Activated B cell treated with CpG ODN at 0.5 μM for 24 hours (primary cell): ENCODE measurements at regions of chr3 and their contacts with region 1.

Region 1: DNA sequence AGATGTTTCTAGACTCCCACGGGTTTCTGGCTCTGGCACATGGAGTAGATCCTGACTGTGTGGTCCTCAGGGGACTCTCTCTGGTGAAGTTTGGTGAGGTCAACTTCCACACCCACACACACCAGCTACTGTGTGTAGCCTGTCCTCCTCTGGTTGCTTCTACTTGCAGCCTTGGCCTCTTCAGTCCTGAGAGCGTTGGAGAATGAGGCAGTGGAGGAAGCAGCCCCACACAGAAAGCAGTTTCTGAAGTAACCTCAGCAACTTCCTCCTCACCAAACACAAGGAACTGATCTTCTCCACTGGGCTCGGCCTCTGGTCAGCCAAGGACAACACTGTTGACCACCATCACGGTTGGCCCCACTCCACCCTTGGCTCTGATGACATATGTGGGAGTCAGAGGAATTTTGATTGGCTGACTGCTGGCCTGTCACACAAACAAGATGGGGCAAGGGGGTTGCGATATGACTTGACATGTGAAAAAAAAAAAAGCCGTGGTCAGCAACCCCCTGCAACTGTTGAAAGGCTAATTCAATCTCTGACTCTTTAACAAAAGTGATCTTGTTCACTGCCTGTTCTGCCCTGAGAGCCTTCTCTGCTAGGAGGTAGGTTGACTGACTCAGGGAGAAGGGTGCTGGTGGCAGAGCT is 19.6 kb downstream of the CD86 start:
- DNase-seq: peak; percentile 32
- ATAC-seq: peak; percentile 18
- H3K4me3 Mint-ChIP-seq: peak overlapping the region; percentile 62
- H3K27ac Mint-ChIP-seq: peak overlapping the region; percentile 89
- H3K4me1 Mint-ChIP-seq: peaks cover 74% of the 10 kb centered on the region
- H3K27me3 Mint-ChIP-seq: no peaks in the 10 kb centered on the region
- CTCF ChIP-seq: no peak

Region 2: GRCh38 chr3:121958801-121959200 is 115.9 kb before region 1 on chr3:
- CTCF ChIA-PET with region 1: no interaction called
- POLR2A ChIA-PET with region 1: no interaction called
- intact Hi-C with region 1: no loop called
- DNase-seq: no peak
- ATAC-seq: no peak
- H3K4me3 Mint-ChIP-seq: no peak overlapping the region
- H3K27ac Mint-ChIP-seq: no peak overlapping the region
- H3K4me1 Mint-ChIP-seq: peaks cover 29% of the 10 kb centered on the region
- H3K27me3 Mint-ChIP-seq: no peaks in the 10 kb centered on the region
- CTCF ChIP-seq: no peak

Region 3: DNA sequence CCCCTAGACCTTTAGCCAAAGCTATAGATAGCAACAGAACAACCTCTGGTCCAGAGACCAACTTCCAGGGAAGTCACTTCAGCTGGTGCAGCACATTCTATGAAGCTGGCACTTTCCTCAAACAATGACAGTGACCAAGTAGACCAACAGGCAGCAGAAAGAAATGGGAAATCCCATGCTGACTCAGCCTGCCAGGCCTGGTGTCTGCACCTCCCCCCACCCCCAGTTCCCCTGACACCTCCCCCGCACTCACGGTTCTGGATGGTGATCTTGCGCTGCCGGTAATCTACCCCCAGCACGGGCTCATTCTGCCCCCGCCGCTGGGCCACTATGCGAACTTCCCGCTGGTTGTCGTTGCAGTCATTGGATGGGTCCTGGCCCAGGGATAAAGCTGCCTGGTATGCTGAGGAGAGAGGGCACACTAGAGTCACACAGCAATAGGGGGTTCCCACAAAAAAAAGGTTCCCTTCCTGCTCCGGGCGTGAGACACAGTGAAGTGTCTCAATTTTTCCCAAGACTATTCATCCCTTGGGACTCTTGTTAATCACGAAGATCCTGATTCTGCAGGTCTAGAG is 69.7 kb before region 1 on chr3:
- CTCF ChIA-PET with region 1: no interaction called
- POLR2A ChIA-PET with region 1: interaction called, 8 read pairs
- intact Hi-C with region 1: loop called (anchors 2 kb)
- DNase-seq: peak; percentile 49
- ATAC-seq: peak; percentile 76
- H3K4me3 Mint-ChIP-seq: peak overlapping the region; percentile 76
- H3K27ac Mint-ChIP-seq: peak overlapping the region; percentile 91
- H3K4me1 Mint-ChIP-seq: peaks cover 65% of the 10 kb centered on the region
- H3K27me3 Mint-ChIP-seq: no peaks in the 10 kb centered on the region
- CTCF ChIP-seq: no peak

Region 4: DNA sequence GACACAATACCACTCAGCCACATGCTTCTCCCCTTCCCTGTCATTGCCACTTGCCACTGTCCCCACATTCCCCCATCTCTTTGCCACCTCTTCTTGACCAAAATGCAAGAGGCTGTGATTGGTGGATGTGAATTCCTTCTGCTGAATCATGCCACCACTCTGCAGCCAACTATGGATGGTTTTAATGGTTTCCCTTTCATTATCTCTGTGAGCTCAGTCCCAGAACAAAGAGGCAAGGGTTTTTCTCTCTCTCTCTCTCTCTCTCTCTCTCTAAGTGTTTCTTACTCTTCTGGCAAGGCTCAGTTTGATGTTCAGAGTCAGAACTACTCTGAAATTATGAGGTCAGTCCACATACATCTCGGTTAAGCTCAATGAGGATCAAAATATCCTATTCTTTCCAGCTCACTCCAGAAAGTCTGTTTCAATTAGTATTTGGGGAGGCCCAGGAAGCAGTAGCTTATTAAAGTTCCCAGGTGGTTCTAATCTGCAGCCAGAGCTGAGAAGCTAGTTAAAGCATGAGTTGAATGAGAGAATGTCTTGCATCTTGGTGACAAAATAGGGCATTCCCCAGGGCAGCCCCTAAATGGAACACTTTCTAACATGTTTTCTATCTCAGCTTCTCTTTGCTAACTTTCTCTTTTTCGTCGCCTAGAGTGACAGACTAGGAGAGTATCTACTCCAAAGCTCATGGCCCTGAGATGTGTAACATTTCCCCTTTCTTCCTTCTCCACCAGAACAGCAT is 44.2 kb before region 1 on chr3:
- CTCF ChIA-PET with region 1: no interaction called
- POLR2A ChIA-PET with region 1: interaction called, 14 read pairs
- intact Hi-C with region 1: no loop called
- DNase-seq: no peak
- ATAC-seq: peak; percentile 81
- H3K4me3 Mint-ChIP-seq: peak overlapping the region; percentile 60
- H3K27ac Mint-ChIP-seq: peak overlapping the region; percentile 85
- H3K4me1 Mint-ChIP-seq: peaks cover 39% of the 10 kb centered on the region
- H3K27me3 Mint-ChIP-seq: no peaks in the 10 kb centered on the region
- CTCF ChIP-seq: no peak